ENCODE measurements at regions of chr16 and their contacts with region 1.

Region 1: GRCh38 chr16:4846891-4847773 is at the starts of genes GLYR1 and UBN1:
- DNase-seq: peak; percentile 97 to 100 (median 99)

Region 2: GRCh38 chr16:4734063-4734729 is 112.9 kb before region 1 on chr16 and contains the starts of genes ANKS3 and DNAAF8:
- intact Hi-C with region 1: loop called (anchors 10 kb)
- DNase-seq: peak; percentile 90 to 98 (median 96)

Region 3: GRCh38 chr16:4766874-4767628 is 80.1 kb before region 1 on chr16 and contains the start of gene ZNF500:
- intact Hi-C with region 1: loop called (anchors 5 kb)
- DNase-seq: peak; percentile 97 to 100 (median 99)

Region 4: DNA sequence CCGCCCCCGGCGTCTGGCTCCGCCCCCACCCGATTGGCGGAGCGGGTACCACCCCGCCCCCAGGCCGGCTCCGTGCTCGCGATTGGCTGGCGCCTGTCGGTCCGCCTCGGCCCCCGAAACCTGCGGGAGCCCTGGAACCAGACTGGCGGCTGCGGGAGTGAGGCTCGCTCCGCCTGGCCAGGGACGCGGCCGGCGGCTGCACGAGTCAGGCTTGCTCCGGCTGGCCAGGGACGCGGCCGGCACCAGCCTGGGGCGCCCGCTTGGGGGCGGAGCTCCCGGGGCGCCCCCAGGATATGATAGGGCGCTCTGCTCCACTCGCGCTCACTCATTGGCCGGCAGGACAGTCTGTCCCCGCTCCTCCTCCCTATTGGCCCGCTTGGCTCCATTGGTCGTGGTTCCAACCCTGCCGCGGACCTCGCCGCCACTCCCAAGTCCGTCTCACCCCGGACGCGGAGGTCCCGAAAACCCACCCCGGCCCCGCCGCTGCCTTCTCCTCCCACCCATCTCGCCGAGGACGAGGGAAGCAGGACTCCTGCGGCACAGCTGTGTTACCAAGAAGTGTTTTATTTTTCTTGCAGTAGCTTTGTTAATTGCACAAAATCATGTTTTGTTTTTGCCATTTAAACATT is 44.4 kb before region 1 on chr16:
- intact Hi-C with region 1: loop called (anchors 5 kb)
- DNase-seq: peak; percentile 87 to 98 (median 94)

Region 5: GRCh38 chr16:4957720-4958509 is 110.8 kb after region 1 on chr16 and contains the start of gene SEC14L5:
- intact Hi-C with region 1: loop called (anchors 5 kb)
- DNase-seq: peak; percentile 95 to 100 (median 99)

Measured in head of caudate nucleus (tissue), 42 donors.